ENCODE measurements at regions of chr20 and their contacts with region 1.

Region 1: DNA sequence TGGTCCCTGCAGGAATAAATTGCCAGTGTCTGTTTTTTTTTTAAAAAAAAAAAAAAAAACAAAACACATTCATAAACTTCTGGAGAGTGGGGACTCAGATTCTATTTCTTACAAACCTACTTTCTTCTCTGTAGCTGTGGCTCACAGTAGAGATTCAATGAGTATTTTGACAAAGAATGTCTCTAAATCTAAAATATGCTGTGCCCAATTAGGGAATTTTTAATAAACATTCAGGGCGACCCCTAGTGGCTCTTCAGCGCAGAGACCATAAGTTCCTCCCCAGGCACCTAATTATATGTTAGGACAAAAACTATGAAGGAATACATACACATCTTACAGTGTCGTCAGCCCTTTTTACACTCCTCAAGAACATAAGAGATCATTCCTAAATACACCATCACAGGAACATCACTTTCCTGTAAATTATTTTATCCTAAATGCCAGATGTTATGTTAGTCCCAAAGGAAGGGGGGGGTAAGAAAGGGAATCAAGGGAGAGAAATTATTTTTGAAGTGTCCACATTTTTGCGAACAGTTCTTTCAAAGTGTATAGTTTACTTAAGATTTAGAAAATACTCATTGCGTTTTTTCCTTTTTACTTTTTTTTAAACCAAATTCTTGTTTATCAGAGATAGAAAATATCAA is 21.8 kb upstream of the NAA20 start:
- DNase-seq: no peak
- ATAC-seq: peak; percentile 84
- H3K4me3 ChIP-seq: no peak overlapping the region
- H3K27ac ChIP-seq: no peak overlapping the region
- H3K4me1 ChIP-seq: no peaks in the 10 kb centered on the region
- H3K27me3 ChIP-seq: no peaks in the 10 kb centered on the region; a peak in 1 of 4 replicates
- CTCF ChIP-seq: peak; percentile 68 to 80 (median 73)
- EP300 ChIP-seq: no peak
- POLR2A ChIP-seq: no peak
- RAD21 ChIP-seq: peak; percentile 91

Region 2: DNA sequence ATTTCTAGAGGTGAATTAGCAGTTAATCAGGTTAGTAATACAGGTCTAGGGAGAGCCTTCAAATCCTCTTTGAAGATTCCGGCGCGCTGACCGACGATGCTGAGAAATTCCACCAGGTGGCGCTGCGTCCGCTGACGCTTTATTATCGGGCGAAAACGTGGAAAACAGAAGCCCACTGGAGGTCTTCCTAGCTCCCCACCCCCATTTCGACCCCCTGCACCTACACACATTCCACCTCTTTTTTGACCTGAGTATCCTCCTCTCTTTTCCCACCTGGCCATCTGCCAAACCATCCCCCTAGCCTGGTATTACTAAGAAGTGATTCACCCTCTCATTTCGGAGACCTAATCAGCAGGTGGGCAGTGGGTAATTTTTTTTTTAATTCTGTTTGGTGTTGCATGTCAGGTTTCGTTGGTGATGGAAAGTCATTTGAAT is 302.6 kb before region 1 on chr20:
- CTCF ChIA-PET with region 1: interaction called, 9 read pairs
- POLR2A ChIA-PET with region 1: interaction called, 4 read pairs
- RAD21 ChIA-PET with region 1: interaction called, 5 read pairs
- SMC1A ChIA-PET with region 1: interaction called, 13 read pairs
- in situ Hi-C with region 1: loop called (anchors 5 kb)
- intact Hi-C with region 1: loop called (anchors 1 kb)
- DNase-seq: no peak
- ATAC-seq: peak; percentile 81
- H3K4me3 ChIP-seq: no peak overlapping the region
- H3K27ac ChIP-seq: no peak overlapping the region
- H3K4me1 ChIP-seq: no peaks in the 10 kb centered on the region
- H3K27me3 ChIP-seq: peaks cover 0 to 2% of the 10 kb centered on the region in 2 experiments; a peak in 2 of 4 replicates
- CTCF ChIP-seq: peak; percentile 82 to 88 (median 85)
- EP300 ChIP-seq: no peak
- POLR2A ChIP-seq: no peak
- RAD21 ChIP-seq: peak; percentile 62

Region 3: DNA sequence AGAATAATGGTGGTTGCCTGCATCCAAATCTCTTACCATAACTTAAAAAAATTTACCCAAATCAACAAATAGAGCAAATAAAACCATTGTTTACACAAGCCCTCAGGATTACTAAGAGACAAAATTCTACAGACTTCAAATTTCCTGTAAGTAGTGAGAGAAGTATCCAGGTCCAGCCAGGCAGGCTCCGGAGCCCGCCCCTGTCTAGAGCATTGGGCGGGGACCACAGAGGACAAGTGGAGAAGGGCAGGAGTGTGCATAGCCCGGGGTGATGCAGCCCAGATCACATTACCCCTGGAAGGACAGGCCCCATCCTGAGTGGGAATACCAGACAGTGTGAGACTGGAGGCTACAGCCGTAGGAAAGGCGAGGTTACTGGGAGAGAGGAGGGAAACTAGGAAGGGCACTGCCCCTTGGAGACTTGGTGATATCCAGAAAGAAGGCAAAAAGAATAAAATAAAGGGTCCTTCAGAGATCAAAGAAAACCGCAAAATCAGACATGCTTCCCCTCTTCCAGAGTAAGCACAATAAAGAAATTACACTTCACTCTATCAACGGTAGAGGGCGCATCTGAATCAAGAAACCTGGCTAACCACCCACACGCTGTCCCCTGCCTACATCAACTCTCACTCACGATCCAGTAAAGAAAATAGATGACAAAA is 210.7 kb before region 1 on chr20:
- CTCF ChIA-PET with region 1: interaction called, 34 read pairs
- POLR2A ChIA-PET with region 1: interaction called, 3 read pairs
- RAD21 ChIA-PET with region 1: interaction called, 14 read pairs
- SMC1A ChIA-PET with region 1: interaction called, 34 read pairs
- in situ Hi-C with region 1: loop called (anchors 5 kb)
- intact Hi-C with region 1: loop called (anchors 1 kb)
- DNase-seq: peak; percentile 9
- ATAC-seq: peak; percentile 88
- H3K4me3 ChIP-seq: no peak overlapping the region
- H3K27ac ChIP-seq: no peak overlapping the region
- H3K4me1 ChIP-seq: peaks cover 12% of the 10 kb centered on the region; the same call in 1 of the 2 replicates
- H3K27me3 ChIP-seq: no peaks in the 10 kb centered on the region
- CTCF ChIP-seq: peak; percentile 61 to 71 (median 64)
- EP300 ChIP-seq: no peak
- POLR2A ChIP-seq: no peak
- RAD21 ChIP-seq: peak; percentile 85

Region 4: DNA sequence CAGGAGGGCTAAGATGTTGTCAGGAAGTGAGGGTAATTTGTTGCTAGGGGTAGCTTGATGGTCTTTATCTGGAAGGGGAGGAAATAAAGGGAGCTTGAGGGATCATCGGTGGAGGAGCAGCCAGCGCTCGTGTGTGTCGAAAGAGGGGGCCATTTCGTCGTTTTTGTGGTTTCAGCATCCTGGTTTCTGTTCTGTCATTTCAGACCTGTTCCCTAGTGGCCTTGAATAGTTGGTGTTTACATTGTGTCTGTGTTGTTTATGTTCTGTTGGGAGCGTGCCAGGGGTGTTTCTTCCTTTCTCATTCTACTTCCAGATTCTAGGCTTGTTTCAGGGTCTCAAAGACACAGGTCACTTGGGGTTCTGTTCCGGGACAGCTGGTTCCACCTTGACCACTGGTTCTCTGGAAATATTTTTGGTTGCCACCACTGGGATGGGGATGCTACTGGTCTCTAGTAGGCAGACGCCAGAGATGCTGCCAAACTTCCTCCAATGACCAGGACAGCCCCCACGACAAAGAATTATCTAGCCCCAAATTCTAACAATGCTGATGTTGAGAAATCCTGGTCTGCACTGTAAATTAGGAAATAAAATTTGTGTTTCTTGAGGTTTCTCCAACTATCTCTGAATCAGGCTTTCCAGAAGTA is 92.1 kb before region 1 on chr20:
- CTCF ChIA-PET with region 1: interaction called, 77 read pairs
- POLR2A ChIA-PET with region 1: interaction called, 4 read pairs
- RAD21 ChIA-PET with region 1: interaction called, 42 read pairs
- SMC1A ChIA-PET with region 1: interaction called, 67 read pairs
- in situ Hi-C with region 1: loop called (anchors 5 kb)
- intact Hi-C with region 1: loop called (anchors 1 kb)
- DNase-seq: no peak
- ATAC-seq: peak; percentile 94
- H3K4me3 ChIP-seq: no peak overlapping the region
- H3K27ac ChIP-seq: no peak overlapping the region
- H3K4me1 ChIP-seq: no peaks in the 10 kb centered on the region
- H3K27me3 ChIP-seq: no peaks in the 10 kb centered on the region
- CTCF ChIP-seq: peak; percentile 42 to 85 (median 59); a peak in 5 of 6 replicates
- EP300 ChIP-seq: no peak; a peak in 1 of 4 replicates
- POLR2A ChIP-seq: no peak
- RAD21 ChIP-seq: peak; percentile 84

Region 5: DNA sequence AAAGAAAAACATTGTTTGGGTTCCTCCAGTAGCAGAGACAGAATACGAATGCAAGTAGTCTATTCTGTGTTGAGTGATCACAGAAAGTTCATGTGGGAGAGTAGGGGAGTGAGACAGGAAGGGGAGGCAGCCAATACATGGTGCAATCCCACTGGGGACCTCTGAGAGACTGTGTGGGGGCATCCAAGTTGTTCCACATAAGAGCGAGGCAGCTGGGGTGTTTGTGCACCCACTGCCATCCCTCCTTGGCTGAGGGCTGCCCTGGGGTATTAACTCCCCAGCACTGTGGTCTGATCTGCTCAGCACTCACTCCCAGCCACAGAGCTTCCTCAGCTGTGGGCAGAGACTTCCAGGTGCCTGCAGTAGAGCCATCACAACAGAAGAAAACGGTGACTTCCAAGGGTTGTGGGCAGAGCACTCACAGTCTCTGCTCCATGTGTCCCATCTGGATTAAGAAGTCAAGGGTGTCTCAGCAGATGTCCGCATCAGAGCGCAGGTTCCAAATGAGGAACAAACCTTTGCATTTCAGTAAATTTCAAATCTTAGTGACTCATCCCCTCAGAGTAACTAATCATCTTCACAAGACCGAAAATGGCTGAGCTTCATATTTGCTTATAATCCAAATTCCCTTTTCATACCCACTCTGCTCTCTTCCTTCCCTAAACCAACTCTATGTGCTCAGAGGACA is 80.1 kb before region 1 on chr20:
- CTCF ChIA-PET with region 1: interaction called, 24 read pairs
- POLR2A ChIA-PET with region 1: no interaction called
- RAD21 ChIA-PET with region 1: interaction called, 23 read pairs
- SMC1A ChIA-PET with region 1: interaction called, 21 read pairs
- in situ Hi-C with region 1: no loop called
- intact Hi-C with region 1: no loop called
- DNase-seq: no peak
- ATAC-seq: peak; percentile 52
- H3K4me3 ChIP-seq: no peak overlapping the region
- H3K27ac ChIP-seq: peak overlapping the region; percentile 49
- H3K4me1 ChIP-seq: peaks cover 71% of the 10 kb centered on the region
- H3K27me3 ChIP-seq: no peaks in the 10 kb centered on the region
- CTCF ChIP-seq: no peak
- EP300 ChIP-seq: no peak
- POLR2A ChIP-seq: no peak
- RAD21 ChIP-seq: no peak

Region 6: GRCh38 chr20:19976595-19977372 is 18.6 kb before region 1 on chr20:
- CTCF ChIA-PET with region 1: interaction called, 13 read pairs
- POLR2A ChIA-PET with region 1: interaction called, 4 read pairs
- RAD21 ChIA-PET with region 1: interaction called, 3 read pairs
- SMC1A ChIA-PET with region 1: interaction called, 6 read pairs
- in situ Hi-C with region 1: no loop called
- intact Hi-C with region 1: no loop called
- DNase-seq: no peak
- ATAC-seq: 0 out of 3 replicates have a peak, but pooled peaks have one; percentile 21
- H3K4me3 ChIP-seq: no peak overlapping the region
- H3K27ac ChIP-seq: no peak overlapping the region
- H3K4me1 ChIP-seq: no peaks in the 10 kb centered on the region
- H3K27me3 ChIP-seq: no peaks in the 10 kb centered on the region; a peak in 1 of 4 replicates
- CTCF ChIP-seq: no peak
- EP300 ChIP-seq: no peak
- POLR2A ChIP-seq: no peak
- RAD21 ChIP-seq: no peak